Spleen (tissue), 13 donors: ENCODE measurements at regions of chr16 and their contacts with region 1.

Region 1: DNA sequence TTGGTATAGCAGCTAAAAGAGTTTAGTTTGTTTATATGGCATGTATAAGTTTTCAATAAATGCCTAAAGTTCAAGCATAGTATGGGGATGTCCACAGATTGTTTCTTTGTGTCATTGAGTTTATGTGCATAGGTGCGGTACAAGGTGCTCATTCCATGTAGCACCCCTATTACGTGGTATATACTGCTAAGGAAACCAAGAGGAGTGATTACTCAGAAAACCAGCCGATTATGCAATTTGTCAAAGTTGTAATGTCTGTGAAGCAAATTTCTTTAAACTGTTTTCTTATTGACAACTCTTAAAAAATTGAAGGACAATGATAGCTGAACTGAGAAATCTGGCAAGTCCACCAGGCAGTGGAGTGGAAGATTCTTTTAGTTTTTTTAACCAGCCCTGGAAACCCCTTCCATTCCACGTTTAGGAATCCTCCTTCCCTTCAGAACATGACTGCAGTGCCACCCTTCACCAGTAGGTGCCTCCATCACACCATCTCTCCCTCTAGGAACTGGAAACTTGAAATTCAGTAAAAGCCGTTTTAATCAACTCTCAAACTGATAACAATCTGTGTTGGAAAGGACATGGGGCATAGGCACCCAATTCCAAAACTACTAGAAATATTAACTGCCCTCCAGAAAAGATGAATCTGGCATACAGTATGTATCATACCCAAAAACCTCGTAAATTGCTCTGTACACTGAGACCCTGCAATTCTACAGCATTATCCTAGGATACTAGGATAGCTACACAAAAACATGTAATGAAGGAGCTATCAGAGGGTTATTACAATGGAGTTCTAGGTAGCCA is 43.5 kb downstream of the REXO5 start:
- DNase-seq: no peak
- H3K4me3 ChIP-seq: no peak overlapping the region
- H3K27ac ChIP-seq: peak overlapping the region in 2 of 8 donors; percentile 2 to 62
- H3K4me1 ChIP-seq: peaks cover 0 to 35% (median 15%) of the 10 kb centered on the region in 6 donors
- H3K27me3 ChIP-seq: no peaks in the 10 kb centered on the region
- CTCF ChIP-seq: peak; percentile 84 to 96 (median 94)
- POLR2A ChIP-seq: no peak

Region 2: DNA sequence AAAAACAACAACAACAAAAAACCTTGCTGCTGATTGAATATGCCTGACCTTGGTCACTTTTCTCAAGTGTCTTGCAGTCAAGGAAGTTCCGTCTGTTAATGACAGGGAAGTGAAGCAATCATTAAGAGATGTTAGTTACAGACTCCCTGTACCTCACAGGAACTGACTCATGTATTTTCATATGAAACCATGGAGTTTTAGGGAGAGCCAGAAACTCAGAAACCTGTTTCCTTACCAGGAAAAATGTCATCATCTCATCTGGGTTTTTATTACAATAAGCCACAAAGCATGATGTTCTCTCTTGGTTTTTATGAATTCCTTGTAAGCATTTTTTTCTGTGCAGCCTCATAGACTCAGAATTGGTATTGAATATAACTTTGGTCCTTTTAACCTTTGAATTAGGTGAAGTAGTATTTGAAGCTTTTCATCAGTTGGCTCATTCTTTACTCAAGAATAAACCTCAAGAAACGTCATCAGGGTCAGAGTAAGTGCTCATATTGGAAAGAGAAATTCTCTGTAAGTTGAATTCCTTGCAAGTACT is 61.1 kb after region 1 on chr16:
- intact Hi-C with region 1: no loop called
- DNase-seq: no peak
- H3K4me3 ChIP-seq: no peak overlapping the region
- H3K27ac ChIP-seq: peak overlapping the region in 7 of 8 donors; percentile 58 to 80 (median 74)
- H3K4me1 ChIP-seq: peaks cover 8 to 79% (median 41%) of the 10 kb centered on the region in 6 donors
- H3K27me3 ChIP-seq: no peaks in the 10 kb centered on the region
- CTCF ChIP-seq: no peak
- POLR2A ChIP-seq: no peak

Region 3: DNA sequence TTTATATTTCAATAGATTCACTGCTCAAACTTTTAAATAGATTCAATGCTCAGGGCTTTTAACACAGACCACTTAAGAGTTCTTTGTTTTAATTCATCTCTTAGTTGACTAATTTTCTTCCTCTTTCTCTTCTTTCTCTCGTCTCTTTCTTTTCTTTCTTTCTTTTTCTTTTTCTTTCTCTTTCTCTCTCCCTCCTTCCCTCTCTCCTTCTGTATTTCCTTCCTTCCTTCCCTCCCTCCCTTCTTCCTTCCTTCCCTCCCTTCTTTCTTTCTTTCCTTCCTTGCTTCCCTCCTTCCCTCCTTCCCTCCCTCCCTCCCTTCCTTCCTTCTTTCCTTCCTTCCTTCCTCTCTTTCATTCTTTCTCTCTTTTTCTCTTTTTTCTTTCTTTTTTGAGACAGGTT is 155.2 kb after region 1 on chr16:
- intact Hi-C with region 1: no loop called
- DNase-seq: no peak
- H3K4me3 ChIP-seq: no peak overlapping the region
- H3K27ac ChIP-seq: no peak overlapping the region
- H3K4me1 ChIP-seq: no peaks in the 10 kb centered on the region
- H3K27me3 ChIP-seq: peaks cover 0 to 7% (median 0%) of the 10 kb centered on the region in 7 donors
- CTCF ChIP-seq: no peak
- POLR2A ChIP-seq: no peak

Region 4: GRCh38 chr16:21083729-21084268 is 234.0 kb after region 1 on chr16:
- intact Hi-C with region 1: loop called (anchors 5 kb)
- DNase-seq: peak; percentile 79
- H3K4me3 ChIP-seq: no peak overlapping the region
- H3K27ac ChIP-seq: no peak overlapping the region
- H3K4me1 ChIP-seq: peaks cover 0 to 3% (median 0%) of the 10 kb centered on the region in 6 donors
- H3K27me3 ChIP-seq: peaks cover 0 to 4% (median 0%) of the 10 kb centered on the region in 7 donors
- CTCF ChIP-seq: peak; percentile 25 to 73 (median 64)
- POLR2A ChIP-seq: no peak